Psoas muscle (tissue), 8 donors: ENCODE measurements at regions of chr4 and their contacts with region 1.

Region 1: GRCh38 chr4:171966356-171966755 is 153.2 kb downstream of the GALNTL6 start:
- DNase-seq: no peak
- ATAC-seq: no peak
- H3K4me3 ChIP-seq: no peak overlapping the region
- H3K27ac ChIP-seq: no peak overlapping the region
- H3K4me1 ChIP-seq: no peaks in the 10 kb centered on the region
- H3K27me3 ChIP-seq: no peaks in the 10 kb centered on the region
- CTCF ChIP-seq: no peak

Region 2: GRCh38 chr4:171170671-171171070 is 795.7 kb before region 1 on chr4:
- intact Hi-C with region 1: loop called in 1 of 2 experiments (anchors 10 kb)
- DNase-seq: no peak
- ATAC-seq: no peak
- H3K4me3 ChIP-seq: no peak overlapping the region
- H3K27ac ChIP-seq: no peak overlapping the region
- H3K4me1 ChIP-seq: no peaks in the 10 kb centered on the region
- H3K27me3 ChIP-seq: no peaks in the 10 kb centered on the region
- CTCF ChIP-seq: no peak